ENCODE measurements at regions of chr4 and their contacts with region 1.

Region 1: GRCh38 chr4:52028969-52029368 is 8.8 kb upstream of the LRRC66 start:
- DNase-seq: no peak
- H3K4me3 ChIP-seq: no peak overlapping the region
- H3K27ac ChIP-seq: no peak overlapping the region
- H3K4me1 ChIP-seq: peaks cover 0 to 11% of the 10 kb centered on the region in 2 donors
- H3K27me3 ChIP-seq: no peaks in the 10 kb centered on the region
- CTCF ChIP-seq: no peak
- POLR2A ChIP-seq: no peak

Region 2: DNA sequence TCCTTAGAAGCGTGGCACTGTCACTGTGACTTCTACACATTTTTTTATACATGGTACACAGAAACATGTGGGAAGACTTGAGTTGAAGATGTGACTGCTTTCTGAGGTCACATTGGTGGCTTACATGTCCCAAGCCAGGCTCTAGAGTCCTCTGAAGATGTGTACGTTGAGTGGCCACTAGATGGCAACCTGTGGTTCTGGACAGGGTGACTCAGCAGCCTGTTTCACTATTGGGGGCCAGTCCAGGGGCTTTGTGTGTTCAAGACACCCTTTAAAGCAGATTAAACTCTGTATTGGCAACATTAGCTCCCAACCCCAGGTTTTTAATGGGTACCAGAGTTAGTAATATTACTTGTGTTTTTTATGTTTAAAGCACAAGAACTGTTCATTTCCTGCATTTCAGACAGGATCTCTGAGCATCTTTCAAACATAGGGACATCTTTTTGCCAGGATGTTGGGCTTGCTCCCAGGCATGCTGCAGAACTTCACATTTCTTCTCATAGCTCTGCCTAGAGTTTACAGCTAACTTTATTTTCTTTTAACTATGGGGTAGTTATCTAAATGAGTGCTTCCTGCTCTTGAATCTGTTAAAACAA is 133.1 kb before region 1 on chr4:
- intact Hi-C with region 1: loop called (anchors 10 kb)
- DNase-seq: peak; percentile 56 to 86 (median 65)
- H3K4me3 ChIP-seq: no peak overlapping the region
- H3K27ac ChIP-seq: no peak overlapping the region
- H3K4me1 ChIP-seq: peaks cover 0 to 8% of the 10 kb centered on the region in 2 donors
- H3K27me3 ChIP-seq: no peaks in the 10 kb centered on the region
- CTCF ChIP-seq: peak; percentile 59 to 78 (median 68)
- POLR2A ChIP-seq: no peak

Region 3: GRCh38 chr4:51906167-51906958 is 122.6 kb before region 1 on chr4:
- intact Hi-C with region 1: loop called in 1 of 2 experiments (anchors 10 kb)
- DNase-seq: no peak
- H3K4me3 ChIP-seq: no peak overlapping the region
- H3K27ac ChIP-seq: peak overlapping the region in 1 of 5 donors; percentile 33
- H3K4me1 ChIP-seq: peaks cover 0 to 12% of the 10 kb centered on the region in 2 donors
- H3K27me3 ChIP-seq: no peaks in the 10 kb centered on the region
- CTCF ChIP-seq: no peak
- POLR2A ChIP-seq: no peak

Region 4: GRCh38 chr4:52091535-52092200 is 62.7 kb after region 1 on chr4:
- intact Hi-C with region 1: no loop called
- DNase-seq: no peak
- H3K4me3 ChIP-seq: no peak overlapping the region
- H3K27ac ChIP-seq: no peak overlapping the region
- H3K4me1 ChIP-seq: no peaks in the 10 kb centered on the region
- H3K27me3 ChIP-seq: no peaks in the 10 kb centered on the region
- CTCF ChIP-seq: no peak
- POLR2A ChIP-seq: no peak

Region 5: DNA sequence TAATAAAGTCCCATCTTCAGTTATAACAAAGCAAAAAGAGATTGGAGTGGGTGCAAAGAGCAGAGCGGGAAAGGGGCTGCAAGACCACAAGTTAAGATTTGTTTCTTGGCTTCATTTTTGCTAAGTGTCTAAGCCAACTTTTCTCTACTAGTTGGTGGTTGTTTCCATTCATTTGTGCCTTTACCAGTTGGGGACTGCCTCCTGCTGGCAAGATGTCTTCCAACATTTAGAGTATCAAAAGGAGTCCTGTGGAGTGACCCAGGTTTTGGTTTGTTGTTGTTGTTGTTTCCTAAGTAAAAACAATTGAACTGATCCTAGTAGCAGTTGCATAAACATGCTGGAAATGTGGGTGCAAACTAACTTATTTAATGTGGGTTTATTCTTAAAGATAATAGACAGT is 143.2 kb after region 1 on chr4:
- intact Hi-C with region 1: no loop called
- DNase-seq: peak in 3 of 7 donors; percentile 4 to 24 (median 10)
- H3K4me3 ChIP-seq: no peak overlapping the region
- H3K27ac ChIP-seq: no peak overlapping the region
- H3K4me1 ChIP-seq: no peaks in the 10 kb centered on the region
- H3K27me3 ChIP-seq: no peaks in the 10 kb centered on the region
- CTCF ChIP-seq: peak in 2 of 6 experiments; percentile 26 to 38
- POLR2A ChIP-seq: no peak

Region 6: DNA sequence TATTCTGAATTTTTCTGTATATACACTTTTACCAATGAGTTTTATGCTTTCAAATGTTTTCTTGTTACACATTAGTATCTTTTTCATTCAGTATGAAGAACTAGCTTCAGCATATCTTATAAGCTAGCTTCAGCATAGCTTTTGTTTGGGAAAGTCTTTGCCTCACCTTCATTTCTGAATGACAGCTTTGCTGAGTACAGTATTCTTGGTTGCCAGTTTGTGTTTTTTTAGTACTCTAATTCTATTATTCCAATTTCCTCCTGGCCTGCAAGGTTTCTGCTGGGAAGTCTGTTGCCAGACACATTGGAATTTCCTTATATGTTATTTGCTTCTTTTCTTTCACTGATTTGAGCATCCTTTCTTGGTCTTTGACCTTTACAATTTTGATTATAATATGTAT is 300.9 kb after region 1 on chr4:
- intact Hi-C with region 1: no loop called
- DNase-seq: no peak
- H3K4me3 ChIP-seq: no peak overlapping the region
- H3K27ac ChIP-seq: no peak overlapping the region
- H3K4me1 ChIP-seq: no peaks in the 10 kb centered on the region
- H3K27me3 ChIP-seq: no peaks in the 10 kb centered on the region
- CTCF ChIP-seq: no peak
- POLR2A ChIP-seq: no peak

Region 7: DNA sequence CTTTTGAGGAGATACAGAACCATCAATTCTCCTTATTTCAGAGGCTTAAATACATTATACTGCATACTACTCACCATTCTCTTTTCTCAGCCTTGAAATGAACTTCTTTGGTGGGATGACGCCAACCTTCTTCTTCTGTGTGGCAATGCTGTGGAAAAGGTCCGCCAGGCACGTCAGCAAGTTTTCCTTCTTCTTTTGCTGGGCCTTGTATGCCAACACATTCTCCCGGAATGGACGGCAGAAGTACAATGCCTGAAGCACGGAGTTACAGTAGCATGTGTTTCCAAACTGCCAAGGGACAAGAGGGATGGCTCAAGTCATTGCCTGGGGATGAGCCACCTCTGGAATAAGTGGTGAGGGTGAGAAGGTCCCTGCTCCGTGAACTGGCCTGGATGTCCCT is 598.9 kb after region 1 on chr4:
- intact Hi-C with region 1: no loop called
- DNase-seq: peak in 4 of 7 donors; percentile 16 to 30 (median 22)
- H3K4me3 ChIP-seq: no peak overlapping the region
- H3K27ac ChIP-seq: no peak overlapping the region
- H3K4me1 ChIP-seq: no peaks in the 10 kb centered on the region
- H3K27me3 ChIP-seq: no peaks in the 10 kb centered on the region
- CTCF ChIP-seq: no peak
- POLR2A ChIP-seq: no peak

Measured in adrenal gland (tissue), 19 donors.